Heart right ventricle (tissue), 16 donors: ENCODE measurements at regions of chr6 and their contacts with region 1.

Region 1: DNA sequence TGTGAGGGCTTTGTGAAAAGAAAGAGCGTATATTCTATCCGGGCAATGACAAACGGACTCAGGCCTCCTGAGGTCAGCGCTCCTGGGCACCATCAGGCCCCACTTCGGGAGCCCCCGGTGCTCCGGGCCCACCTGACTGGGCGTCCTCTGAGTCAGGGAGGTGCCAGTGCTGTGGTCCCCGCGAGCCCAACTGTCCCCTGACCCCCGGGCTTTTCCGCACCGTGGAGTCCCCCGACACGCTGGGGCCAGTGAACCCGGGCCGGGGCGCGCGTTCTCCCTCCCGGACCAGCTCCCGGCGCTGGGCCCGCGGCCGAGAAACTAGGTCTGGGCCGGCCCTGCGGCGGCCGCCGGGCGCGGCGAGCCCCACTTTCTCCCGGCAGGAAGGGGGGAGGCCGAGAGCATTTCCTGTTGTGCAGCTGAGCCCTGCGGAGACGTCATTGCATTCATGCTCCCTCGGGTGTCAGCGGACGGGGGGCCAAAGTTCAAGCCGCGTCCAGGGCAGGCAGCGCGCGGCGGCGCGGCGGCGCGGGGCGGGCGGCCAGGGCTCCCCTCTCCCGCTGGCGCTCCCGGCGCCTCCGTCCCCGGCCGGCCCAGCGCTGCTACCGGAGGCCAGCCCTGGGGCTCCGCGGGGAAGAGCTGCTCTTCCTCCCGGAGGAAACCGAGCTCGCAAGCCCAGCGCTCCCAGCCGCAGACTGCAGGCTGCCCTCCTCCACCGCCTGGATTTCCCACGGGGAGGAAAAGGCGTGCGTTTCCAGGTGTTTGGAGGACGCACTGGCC is 18.3 kb downstream of the HIVEP2 start:
- DNase-seq: peak; percentile 88 to 94
- ATAC-seq: peak; percentile 90 to 96 (median 93)
- H3K4me3 ChIP-seq: peak overlapping the region; percentile 55 to 76 (median 66)
- H3K27ac ChIP-seq: peak overlapping the region; percentile 94 to 98 (median 96)
- H3K4me1 ChIP-seq: peaks cover 0 to 54% (median 29%) of the 10 kb centered on the region in 9 donors
- H3K27me3 ChIP-seq: no peaks in the 10 kb centered on the region
- CTCF ChIP-seq: peak in 1 of 9 donors; percentile 8

Region 2: GRCh38 chr6:142827369-142827768 is 99.3 kb before region 1 on chr6:
- intact Hi-C with region 1: loop called in 1 of 10 experiments (anchors 5 kb)
- DNase-seq: peak; percentile 48 to 66
- ATAC-seq: peak; percentile 75 to 91 (median 86)
- H3K4me3 ChIP-seq: no peak overlapping the region
- H3K27ac ChIP-seq: peak overlapping the region in 3 of 10 donors; percentile 6 to 16 (median 7)
- H3K4me1 ChIP-seq: peaks cover 0 to 63% (median 47%) of the 10 kb centered on the region in 9 donors
- H3K27me3 ChIP-seq: no peaks in the 10 kb centered on the region
- CTCF ChIP-seq: no peak

Region 3: GRCh38 chr6:142954844-142955243 is 28.2 kb after region 1 on chr6:
- intact Hi-C with region 1: no loop called
- DNase-seq: no peak
- ATAC-seq: peak in 1 of 8 donors; percentile 47
- H3K4me3 ChIP-seq: no peak overlapping the region
- H3K27ac ChIP-seq: no peak overlapping the region
- H3K4me1 ChIP-seq: peaks cover 0 to 8% (median 0%) of the 10 kb centered on the region in 9 donors
- H3K27me3 ChIP-seq: no peaks in the 10 kb centered on the region
- CTCF ChIP-seq: no peak